Heart left ventricle (tissue), 16 donors: ENCODE measurements at regions of chr6 and their contacts with region 1.

Region 1: DNA sequence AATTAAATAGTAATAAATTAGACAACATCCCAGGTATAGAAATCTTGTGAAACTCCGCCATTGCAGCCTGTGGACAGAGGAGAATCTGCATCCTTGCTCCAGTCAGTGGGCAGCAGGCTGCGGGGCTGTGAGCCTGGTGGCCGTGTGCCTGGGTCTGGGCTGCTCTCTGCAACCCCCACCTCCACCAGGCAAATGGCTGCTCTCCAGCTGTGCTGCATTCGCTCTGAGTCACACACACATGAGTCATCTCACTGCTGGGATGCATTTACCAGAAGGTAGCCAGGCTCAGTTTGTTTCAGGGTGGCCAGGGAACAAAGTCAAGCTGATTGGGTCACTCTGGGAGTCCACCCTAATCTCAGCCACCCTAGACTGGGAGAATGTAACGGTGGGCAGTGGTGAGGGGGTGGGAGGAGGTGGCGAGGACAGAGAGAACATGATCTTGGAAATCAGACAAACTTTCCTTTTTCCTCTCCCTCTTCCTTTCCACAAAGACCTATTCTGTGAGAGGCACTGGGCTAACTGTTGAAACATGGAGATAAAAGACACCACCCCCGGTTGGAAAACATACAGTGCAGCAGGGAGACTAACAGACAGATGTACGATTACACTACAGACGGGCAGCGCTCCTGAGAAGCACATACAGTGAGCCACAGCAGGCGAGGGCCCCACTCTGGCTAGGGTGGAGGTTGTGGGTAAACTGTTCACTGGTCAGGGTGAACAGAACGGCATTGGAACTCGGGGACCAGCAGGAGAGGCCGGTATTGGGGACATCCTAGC is 59.2 kb downstream of the TRAM2 start:
- DNase-seq: peak; percentile 88 to 94 (median 90)
- ATAC-seq: peak; percentile 90 to 97 (median 95)
- H3K4me3 ChIP-seq: peak overlapping the region in 3 of 12 donors; percentile 9 to 14 (median 12)
- H3K27ac ChIP-seq: peak overlapping the region; percentile 39 to 94 (median 88)
- H3K4me1 ChIP-seq: peaks cover 6 to 75% (median 47%) of the 10 kb centered on the region in 12 donors
- H3K27me3 ChIP-seq: no peaks in the 10 kb centered on the region
- CTCF ChIP-seq: no peak
- POLR2A ChIP-seq: peak in 1 of 2 donors; percentile 41

Region 2: DNA sequence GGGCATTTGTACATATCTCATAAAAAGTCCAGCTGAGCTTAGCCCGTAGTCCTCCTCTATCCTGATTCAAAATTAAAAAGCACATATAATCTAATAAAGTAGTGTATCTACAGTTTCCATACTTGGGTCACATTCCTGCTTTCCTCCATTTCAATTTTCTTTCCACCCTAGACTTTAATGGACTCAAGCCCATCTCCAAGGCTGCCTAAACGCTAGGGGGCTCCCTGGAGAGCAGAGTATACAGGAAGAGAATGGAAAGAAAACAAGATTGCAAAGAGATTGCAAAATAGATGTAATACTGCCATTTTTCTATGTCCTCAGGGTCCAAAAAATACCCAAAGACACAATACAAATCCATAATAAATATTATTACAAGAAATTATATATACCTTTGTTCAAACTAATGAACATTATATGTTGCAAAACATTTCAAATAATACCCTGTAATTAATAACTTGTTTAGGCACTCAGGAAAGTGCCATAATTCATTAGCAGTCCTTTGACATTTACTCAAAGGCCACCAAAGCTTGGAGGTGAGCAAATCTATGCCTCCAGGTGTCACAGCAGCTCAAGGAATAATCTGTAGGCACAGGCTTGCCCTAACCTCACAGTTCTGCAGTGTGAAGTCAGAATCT is 230.8 kb before region 1 on chr6:
- intact Hi-C with region 1: no loop called
- DNase-seq: peak in 4 of 5 donors; percentile 46 to 79 (median 60)
- ATAC-seq: no peak
- H3K4me3 ChIP-seq: no peak overlapping the region
- H3K27ac ChIP-seq: no peak overlapping the region
- H3K4me1 ChIP-seq: peaks cover 0 to 32% (median 12%) of the 10 kb centered on the region in 12 donors
- H3K27me3 ChIP-seq: no peaks in the 10 kb centered on the region
- CTCF ChIP-seq: peak; percentile 42 to 77 (median 60)
- POLR2A ChIP-seq: no peak

Region 3: DNA sequence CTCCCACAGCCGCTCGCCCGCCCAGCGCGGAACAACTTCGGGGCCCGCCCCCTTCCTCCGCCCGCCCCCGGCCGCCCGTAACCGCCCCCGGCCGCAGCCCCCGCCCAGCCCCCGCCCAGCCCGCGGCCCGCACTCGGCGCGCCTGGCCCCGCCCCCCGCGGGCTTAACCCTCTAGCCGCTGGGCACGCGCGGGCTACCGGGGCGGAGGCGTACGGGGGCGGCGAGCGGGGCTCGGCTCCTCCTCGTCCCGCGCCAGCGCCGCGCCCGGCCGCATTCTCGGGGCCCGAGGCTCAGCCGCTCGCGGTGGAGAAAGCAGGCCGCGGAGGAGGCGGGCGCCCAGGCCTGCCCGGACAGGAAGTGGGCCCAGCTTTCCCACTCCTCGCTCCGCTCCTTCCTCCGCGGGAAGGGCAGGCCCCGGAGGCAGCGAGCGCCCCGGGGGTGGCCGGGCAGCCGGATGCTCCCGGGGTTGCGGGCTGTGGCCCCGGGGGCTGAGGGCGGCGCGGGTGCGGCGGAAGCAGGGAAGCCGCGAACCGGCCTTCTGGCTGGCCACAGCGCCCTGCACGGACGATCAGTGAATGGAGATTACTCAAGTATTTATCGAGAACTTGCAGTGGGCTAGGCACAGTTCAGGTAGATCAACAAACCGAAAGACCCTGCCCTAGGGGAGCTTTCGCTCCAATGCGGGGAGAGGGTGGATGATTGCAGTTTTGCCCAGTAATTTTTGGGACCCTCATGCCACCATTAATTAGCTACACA is 59.5 kb after region 1 on chr6 and contains the start of gene TRAM2:
- intact Hi-C with region 1: loop called in 6 of 10 experiments (anchors 2 to 5 kb)
- DNase-seq: peak; percentile 87 to 95 (median 91)
- ATAC-seq: peak; percentile 63 to 91 (median 78)
- H3K4me3 ChIP-seq: peak within 1 kb of the TSS; percentile 50 to 98 (median 91)
- H3K27ac ChIP-seq: peak within 1 kb of the TSS; percentile 91 to 100 (median 99)
- H3K4me1 ChIP-seq: peaks cover 9 to 52% (median 44%) of the 10 kb centered on the region in 12 donors
- H3K27me3 ChIP-seq: no peaks in the 10 kb centered on the region
- CTCF ChIP-seq: peak in 5 of 12 donors; percentile 18 to 34 (median 27)
- POLR2A ChIP-seq: peak in 1 of 2 donors; percentile 41
- total RNA-seq, gene TRAM2: 9.8 to 19.0 (median 12.1) TPM

Region 4: DNA sequence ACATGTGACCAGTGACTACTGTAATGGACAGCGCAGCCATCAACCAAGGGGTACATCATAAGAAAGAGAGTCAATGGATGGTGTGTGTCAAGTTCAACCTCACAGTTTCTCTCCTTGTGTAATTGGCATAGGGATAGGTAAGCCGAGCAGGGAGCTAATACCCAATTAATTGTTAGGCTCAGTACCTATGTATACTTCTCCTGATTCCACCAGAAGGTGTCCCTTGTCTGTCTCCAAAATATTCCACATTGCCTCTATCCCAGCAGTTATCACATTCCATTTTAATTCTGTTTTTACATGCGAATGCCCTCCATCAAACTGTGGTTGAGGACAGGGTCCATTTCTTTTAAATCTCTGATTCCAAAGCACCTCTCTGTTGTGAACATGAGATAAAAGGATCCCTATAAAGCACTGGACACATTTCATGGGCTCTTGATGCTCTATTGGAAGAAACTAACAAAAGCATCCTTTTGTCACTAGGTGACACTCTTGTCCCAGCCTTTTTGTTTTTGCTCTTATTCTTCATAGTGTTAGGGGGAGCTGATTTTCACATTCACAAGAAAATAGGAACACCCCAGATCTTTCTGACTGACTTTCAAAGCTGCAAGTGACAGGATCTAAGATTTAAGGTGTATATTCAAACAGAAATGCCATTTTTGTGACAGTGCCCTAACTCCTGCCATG is 586.4 kb after region 1 on chr6:
- intact Hi-C with region 1: no loop called
- DNase-seq: no peak
- ATAC-seq: no peak
- H3K4me3 ChIP-seq: no peak overlapping the region
- H3K27ac ChIP-seq: no peak overlapping the region
- H3K4me1 ChIP-seq: peaks cover 0 to 5% (median 0%) of the 10 kb centered on the region in 12 donors
- H3K27me3 ChIP-seq: no peaks in the 10 kb centered on the region
- CTCF ChIP-seq: peak in 2 of 12 donors; percentile 5 to 9
- POLR2A ChIP-seq: no peak